BJ (cell line): ENCODE measurements at regions of chr1 and their contacts with region 1.

Region 1: DNA sequence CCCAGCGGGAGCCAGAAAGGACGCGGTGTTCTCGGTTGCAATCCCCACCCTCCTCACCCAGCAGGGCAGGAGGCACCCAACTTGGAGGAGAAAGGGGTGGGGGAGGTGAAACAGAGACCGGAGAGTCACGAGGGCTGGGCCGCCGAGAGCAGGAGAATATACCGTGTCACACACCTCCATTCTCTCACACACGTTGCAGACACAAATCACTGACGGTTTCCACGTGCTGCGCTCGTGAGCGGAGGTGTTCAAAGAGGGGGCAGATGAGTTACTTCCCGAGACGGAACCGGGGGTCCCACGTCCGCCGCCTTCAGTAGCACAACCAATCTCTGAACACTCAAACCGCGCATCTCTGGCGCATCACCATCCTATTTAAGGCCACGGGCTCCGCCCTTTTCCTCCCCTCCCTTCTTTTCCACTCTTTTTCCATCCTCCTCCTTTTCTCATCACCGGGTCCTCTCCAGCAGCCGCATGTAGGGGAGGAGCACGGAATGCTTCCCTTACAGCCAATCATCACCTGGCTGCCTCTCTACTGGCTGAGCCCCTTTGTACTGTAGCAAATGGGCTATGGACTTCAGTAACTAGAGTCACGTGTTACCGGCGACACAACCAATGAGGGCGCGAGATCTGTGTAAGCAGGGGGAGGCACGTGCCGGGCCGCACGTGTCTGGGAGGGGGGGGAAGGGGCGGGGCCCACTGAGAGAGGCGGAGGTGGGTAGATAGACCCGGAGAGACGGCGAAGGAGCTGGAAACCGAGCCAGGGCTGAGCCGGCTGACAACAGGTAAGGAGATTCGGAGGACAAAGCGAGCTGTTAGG is at the start of gene CIART:
- DNase-seq: peak; percentile 98
- H3K4me3 ChIP-seq: peak within 1 kb of the TSS; percentile 67
- H3K27me3 ChIP-seq: no peaks in the 10 kb centered on the region
- CTCF ChIP-seq: no peak
- polyA plus RNA-seq, gene CIART: 17.2 and 18.7 TPM in 2 replicates

Region 2: GRCh38 chr1:150010393-150011115 is 271.5 kb before region 1 on chr1 and contains the start of gene OTUD7B:
- CTCF ChIA-PET with region 1: no interaction called
- POLR2A ChIA-PET with region 1: no interaction called
- DNase-seq: no peak
- H3K4me3 ChIP-seq: peak within 1 kb of the TSS; percentile 81
- H3K27me3 ChIP-seq: no peaks in the 10 kb centered on the region
- CTCF ChIP-seq: no peak
- polyA plus RNA-seq, gene OTUD7B: 9.3 and 10.1 TPM in 2 replicates

Region 3: GRCh38 chr1:150268705-150269403 is 13.2 kb before region 1 on chr1 and contains the start of gene APH1A:
- CTCF ChIA-PET with region 1: interaction called, 27 read pairs
- POLR2A ChIA-PET with region 1: interaction called, 3 read pairs
- DNase-seq: peak; percentile 78
- H3K4me3 ChIP-seq: peak within 1 kb of the TSS; percentile 94
- H3K27me3 ChIP-seq: no peaks in the 10 kb centered on the region
- CTCF ChIP-seq: no peak
- polyA plus RNA-seq, gene APH1A: 156 and 172 TPM in 2 replicates